ENCODE measurements at regions of chr2 and their contacts with region 1.

Region 1: GRCh38 chr2:221068108-221068507 is 504.0 kb downstream of the EPHA4 start:
- DNase-seq: no peak
- H3K4me3 ChIP-seq: no peak overlapping the region
- H3K27ac ChIP-seq: no peak overlapping the region
- H3K4me1 ChIP-seq: no peaks in the 10 kb centered on the region
- H3K27me3 ChIP-seq: no peaks in the 10 kb centered on the region
- CTCF ChIP-seq: no peak
- POLR2A ChIP-seq: no peak

Region 2: GRCh38 chr2:220090004-220090403 is 978.1 kb before region 1 on chr2:
- intact Hi-C with region 1: loop called (anchors 5 kb)
- DNase-seq: no peak
- H3K4me3 ChIP-seq: no peak overlapping the region
- H3K27ac ChIP-seq: no peak overlapping the region
- H3K4me1 ChIP-seq: no peaks in the 10 kb centered on the region
- H3K27me3 ChIP-seq: no peaks in the 10 kb centered on the region
- CTCF ChIP-seq: no peak
- POLR2A ChIP-seq: no peak

Region 3: DNA sequence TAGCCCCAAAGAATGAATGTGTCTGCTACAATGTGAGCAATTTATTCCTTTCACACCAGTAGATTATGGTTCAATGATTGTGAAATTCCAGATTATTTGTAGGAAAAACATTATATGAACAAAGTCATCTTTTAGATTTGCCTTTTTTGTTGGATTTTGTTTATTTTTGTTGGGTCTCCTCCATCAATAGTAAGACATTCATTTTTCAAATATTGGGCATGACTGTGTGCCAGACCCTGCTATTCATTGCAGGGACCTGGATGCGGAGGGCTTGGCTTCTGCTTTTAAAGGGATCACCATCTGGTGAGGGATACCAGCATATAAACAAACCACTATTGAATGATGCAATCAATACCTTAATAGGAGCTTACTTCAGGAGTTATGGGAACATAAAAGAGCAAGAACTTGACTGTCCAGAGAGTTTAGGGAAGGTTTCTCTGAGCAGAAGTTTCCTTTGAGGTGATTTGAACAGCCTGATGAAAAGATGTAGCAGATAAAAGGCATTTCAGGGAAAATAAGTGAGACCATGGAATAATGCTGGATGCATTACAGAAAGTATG is 17.3 kb after region 1 on chr2:
- intact Hi-C with region 1: no loop called
- DNase-seq: no peak
- H3K4me3 ChIP-seq: no peak overlapping the region
- H3K27ac ChIP-seq: no peak overlapping the region
- H3K4me1 ChIP-seq: no peaks in the 10 kb centered on the region
- H3K27me3 ChIP-seq: no peaks in the 10 kb centered on the region
- CTCF ChIP-seq: no peak
- POLR2A ChIP-seq: no peak